ENCODE measurements at regions of chr3 and their contacts with region 1.

Region 1: DNA sequence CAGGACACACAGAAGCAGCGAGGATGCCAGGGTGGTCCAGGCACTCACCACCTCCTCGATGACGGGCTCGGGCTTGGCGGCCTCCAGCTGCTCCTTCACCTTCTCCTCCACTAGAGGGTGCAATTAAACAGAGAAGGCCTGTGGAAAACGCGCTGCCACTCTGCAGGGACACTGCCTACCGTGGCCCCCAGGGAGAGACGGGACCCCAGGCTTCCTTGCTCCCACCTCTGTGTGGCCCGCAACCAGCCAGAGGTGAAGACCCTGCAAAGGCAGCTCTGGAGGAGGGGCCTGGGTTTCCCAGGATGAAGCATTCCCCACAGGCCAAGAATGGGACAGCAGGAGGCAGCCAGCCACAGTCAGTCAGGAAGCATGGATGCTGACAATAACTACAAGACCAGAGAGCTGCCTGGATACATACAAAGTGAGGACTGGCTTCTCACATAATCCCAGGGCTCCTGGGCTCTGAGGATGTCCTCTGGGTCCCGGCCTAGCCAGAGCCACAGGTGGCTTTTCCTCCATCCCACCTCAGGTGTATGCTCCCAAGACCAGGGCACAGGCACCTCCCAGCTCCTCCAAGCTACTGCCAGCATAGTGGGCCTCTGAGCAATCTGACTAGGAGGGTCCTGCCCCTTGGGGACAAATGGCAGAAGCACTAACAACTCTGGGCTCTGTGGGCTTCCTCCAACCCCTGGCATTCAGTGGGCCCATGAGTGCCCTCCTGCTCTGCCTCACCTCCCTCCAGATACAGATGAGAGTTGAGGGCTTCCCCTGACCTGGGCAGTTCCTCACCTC is 46.2 kb downstream of the PTH1R start:
- DNase-seq: no peak
- H3K4me3 ChIP-seq: no peak overlapping the region
- H3K27ac ChIP-seq: no peak overlapping the region
- H3K4me1 ChIP-seq: peaks cover 45 to 56% (median 53%) of the 10 kb centered on the region in 4 donors
- H3K27me3 ChIP-seq: no peaks in the 10 kb centered on the region
- CTCF ChIP-seq: peak; percentile 56 to 75 (median 65)
- EP300 ChIP-seq: no peak
- POLR2A ChIP-seq: no peak

Region 2: DNA sequence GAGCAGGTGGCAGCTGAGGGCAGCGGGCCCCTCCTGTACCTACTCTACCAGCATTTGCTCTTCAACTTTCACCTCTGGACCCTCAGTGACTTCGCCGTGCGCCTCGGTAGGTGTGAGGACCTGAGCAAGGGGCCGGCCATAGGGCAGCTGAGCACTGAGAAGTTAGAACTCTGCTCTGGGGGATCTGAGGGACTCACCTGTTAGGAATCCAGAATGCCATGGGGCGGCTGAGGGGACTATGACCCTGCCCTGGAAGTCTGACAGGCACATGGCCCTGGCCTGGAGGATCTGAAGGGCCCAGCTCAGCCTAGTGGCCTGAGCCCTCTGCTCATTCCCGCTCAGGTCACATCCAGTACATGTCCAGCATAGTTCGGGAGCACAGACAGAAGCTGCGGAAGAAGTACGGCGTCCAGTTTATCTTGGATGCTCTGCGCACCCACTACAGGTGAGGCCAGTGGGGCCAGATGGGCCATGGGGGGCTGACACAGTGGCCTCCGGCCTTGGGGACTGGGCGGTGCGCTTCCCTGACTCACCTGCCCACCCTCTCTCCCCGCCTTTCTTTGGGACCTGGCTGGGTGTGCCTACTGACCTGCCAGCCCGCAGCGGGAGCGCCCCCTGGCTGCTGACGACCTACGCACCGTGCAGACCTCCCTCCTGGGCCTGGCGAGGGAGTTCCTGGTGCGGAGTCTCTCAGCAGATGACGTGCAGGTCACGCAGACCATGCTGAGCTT is 74.5 kb after region 1 on chr3:
- intact Hi-C with region 1: loop called (anchors 1 kb)
- DNase-seq: no peak
- H3K4me3 ChIP-seq: no peak overlapping the region
- H3K27ac ChIP-seq: no peak overlapping the region
- H3K4me1 ChIP-seq: peaks cover 0 to 12% (median 7%) of the 10 kb centered on the region in 4 donors
- H3K27me3 ChIP-seq: no peaks in the 10 kb centered on the region
- CTCF ChIP-seq: peak; percentile 75 to 84 (median 81)
- EP300 ChIP-seq: no peak
- POLR2A ChIP-seq: no peak

Region 3: DNA sequence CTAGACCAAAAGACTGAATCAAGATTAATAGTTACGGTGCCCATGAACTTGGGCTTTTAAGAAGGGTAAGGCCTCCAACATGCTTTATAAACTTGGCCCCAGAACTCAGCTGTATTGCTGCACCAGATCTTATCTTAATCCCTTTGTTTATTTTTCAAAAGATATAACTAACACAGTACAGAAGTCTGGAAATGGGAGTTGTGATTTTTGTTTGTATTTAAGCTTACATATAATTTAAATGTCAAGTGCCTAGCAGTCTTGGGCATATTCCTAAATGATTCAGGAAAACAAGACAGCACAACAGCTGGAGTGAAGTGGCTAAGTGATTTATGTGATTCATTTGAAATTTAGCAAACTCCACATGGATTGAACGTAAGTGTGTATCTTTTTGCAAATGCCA is 111.9 kb after region 1 on chr3:
- intact Hi-C with region 1: no loop called
- DNase-seq: no peak
- H3K4me3 ChIP-seq: no peak overlapping the region
- H3K27ac ChIP-seq: no peak overlapping the region
- H3K4me1 ChIP-seq: peaks cover 0 to 17% (median 4%) of the 10 kb centered on the region in 4 donors
- H3K27me3 ChIP-seq: no peaks in the 10 kb centered on the region
- CTCF ChIP-seq: no peak
- EP300 ChIP-seq: no peak
- POLR2A ChIP-seq: no peak